WTC11 (cell line): ENCODE measurements at regions of chr16 and their contacts with region 1.

Region 1: GRCh38 chr16:27867122-27868110 is 196.1 kb downstream of the GSG1L start:
- DNase-seq: peak; percentile 96
- ATAC-seq: peak; percentile 96
- H3K4me3 Mint-ChIP-seq: no peak overlapping the region
- H3K27ac Mint-ChIP-seq: no peak overlapping the region
- H3K4me1 Mint-ChIP-seq: no peaks in the 10 kb centered on the region
- H3K27me3 Mint-ChIP-seq: peaks cover 4% of the 10 kb centered on the region
- CTCF ChIP-seq: peak; percentile 85

Region 2: DNA sequence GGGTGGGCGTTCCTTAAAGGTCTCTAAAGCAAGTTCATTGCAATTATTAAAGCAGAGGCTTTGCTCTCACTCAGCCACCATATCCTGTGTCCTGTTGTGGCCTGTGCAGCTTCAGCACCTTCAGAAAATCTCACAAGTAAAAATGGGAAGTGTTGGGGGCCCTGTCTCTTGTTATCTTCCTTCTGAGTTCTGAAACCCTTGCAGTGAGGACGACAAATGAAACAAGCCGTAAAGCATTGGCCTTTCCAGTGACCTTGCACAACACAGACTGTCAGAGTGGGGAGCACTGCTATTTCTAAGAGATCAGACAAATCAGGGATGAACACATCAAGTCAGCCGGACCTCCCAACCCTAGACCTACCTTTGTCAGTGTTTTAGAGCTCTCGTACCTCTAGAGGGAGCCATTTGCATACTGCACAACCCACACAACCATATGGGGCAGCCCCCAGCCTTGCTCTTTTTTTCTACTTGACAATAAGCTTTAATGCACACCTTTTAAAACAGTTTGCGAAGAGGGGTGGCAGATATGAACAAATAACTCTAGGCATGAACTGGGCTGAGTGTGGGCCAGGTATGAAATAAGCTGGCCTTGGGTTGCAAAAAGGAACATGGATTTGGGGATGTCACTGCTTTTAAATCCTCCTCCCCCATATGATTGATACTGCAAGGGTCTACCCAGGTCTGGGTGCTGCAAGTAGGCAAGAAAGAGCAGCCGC is 227.7 kb before region 1 on chr16:
- CTCF ChIA-PET with region 1: interaction called, 30 read pairs
- POLR2A ChIA-PET with region 1: no interaction called
- DNase-seq: peak; percentile 40
- ATAC-seq: peak; percentile 87
- H3K4me3 Mint-ChIP-seq: no peak overlapping the region
- H3K27ac Mint-ChIP-seq: no peak overlapping the region
- H3K4me1 Mint-ChIP-seq: peaks cover 25% of the 10 kb centered on the region
- H3K27me3 Mint-ChIP-seq: no peaks in the 10 kb centered on the region
- CTCF ChIP-seq: peak; percentile 46

Region 3: DNA sequence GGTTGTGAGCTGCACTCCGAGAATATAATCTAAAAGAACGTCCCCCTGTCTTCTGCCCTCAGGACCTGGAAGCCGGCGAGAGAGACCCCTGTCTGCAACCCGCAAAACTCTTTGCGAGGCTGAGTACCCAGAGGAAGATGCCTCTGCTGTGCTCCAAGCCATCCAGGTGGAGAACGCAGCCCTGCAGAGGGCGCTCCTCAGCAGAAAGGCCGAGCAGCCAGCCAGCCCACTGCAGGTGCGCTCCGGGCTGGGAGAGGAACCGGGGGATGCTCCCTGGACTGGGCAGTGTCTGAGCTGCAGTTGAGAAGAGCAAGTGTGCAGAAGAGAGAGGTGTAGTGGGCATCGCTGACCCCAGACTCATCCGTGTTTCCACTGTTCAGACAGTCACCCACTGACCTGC is 169.2 kb before region 1 on chr16:
- CTCF ChIA-PET with region 1: interaction called, 41 read pairs
- POLR2A ChIA-PET with region 1: no interaction called
- DNase-seq: peak; percentile 94
- ATAC-seq: peak; percentile 94
- H3K4me3 Mint-ChIP-seq: no peak overlapping the region
- H3K27ac Mint-ChIP-seq: no peak overlapping the region
- H3K4me1 Mint-ChIP-seq: peaks cover 21% of the 10 kb centered on the region
- H3K27me3 Mint-ChIP-seq: no peaks in the 10 kb centered on the region
- CTCF ChIP-seq: peak; percentile 61

Region 4: GRCh38 chr16:27759301-27759871 is 108.0 kb before region 1 on chr16:
- CTCF ChIA-PET with region 1: interaction called, 14 read pairs
- POLR2A ChIA-PET with region 1: no interaction called
- DNase-seq: no peak
- ATAC-seq: no peak
- H3K4me3 Mint-ChIP-seq: no peak overlapping the region
- H3K27ac Mint-ChIP-seq: no peak overlapping the region
- H3K4me1 Mint-ChIP-seq: peaks cover 14% of the 10 kb centered on the region
- H3K27me3 Mint-ChIP-seq: no peaks in the 10 kb centered on the region
- CTCF ChIP-seq: no peak

Region 5: DNA sequence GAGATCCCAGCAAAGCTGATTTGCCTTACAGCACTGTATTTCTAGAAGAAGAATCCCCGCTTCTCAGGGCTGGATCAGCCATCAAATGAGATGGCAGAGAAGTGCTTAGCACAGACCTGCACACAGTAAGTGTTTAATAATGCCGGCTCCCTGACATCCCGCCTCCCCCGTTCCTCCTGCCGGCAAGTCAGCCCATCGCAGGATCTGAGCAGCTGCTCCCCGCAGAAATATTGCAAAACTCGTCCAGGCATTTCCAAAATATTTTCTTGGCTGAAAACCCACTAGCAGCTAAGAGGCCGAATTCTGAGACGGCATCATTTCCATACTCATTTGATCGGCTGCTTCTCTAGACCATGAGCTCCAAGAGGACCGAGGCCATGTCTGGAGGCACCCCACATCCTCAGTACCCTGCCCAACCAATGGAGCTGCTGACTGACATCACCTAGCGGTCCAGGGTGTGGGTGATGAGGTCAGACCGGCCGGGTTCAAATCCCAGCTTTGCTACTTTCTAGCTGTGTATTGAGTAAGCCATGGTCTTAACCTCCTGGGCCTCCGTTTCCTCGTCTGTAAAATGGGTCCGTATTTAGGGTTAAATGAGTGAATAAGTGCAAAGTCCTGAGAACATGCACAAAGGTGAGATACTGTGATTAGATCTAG is 66.0 kb before region 1 on chr16:
- CTCF ChIA-PET with region 1: interaction called, 10 read pairs
- POLR2A ChIA-PET with region 1: no interaction called
- DNase-seq: no peak
- ATAC-seq: no peak
- H3K4me3 Mint-ChIP-seq: no peak overlapping the region
- H3K27ac Mint-ChIP-seq: no peak overlapping the region
- H3K4me1 Mint-ChIP-seq: peaks cover 10% of the 10 kb centered on the region
- H3K27me3 Mint-ChIP-seq: no peaks in the 10 kb centered on the region
- CTCF ChIP-seq: no peak

Region 6: GRCh38 chr16:27853101-27853500 is 14.3 kb before region 1 on chr16:
- CTCF ChIA-PET with region 1: interaction called, 36 read pairs
- POLR2A ChIA-PET with region 1: no interaction called
- DNase-seq: no peak
- ATAC-seq: no peak
- H3K4me3 Mint-ChIP-seq: no peak overlapping the region
- H3K27ac Mint-ChIP-seq: no peak overlapping the region
- H3K4me1 Mint-ChIP-seq: peaks cover 34% of the 10 kb centered on the region
- H3K27me3 Mint-ChIP-seq: no peaks in the 10 kb centered on the region; the same call in 1 of the 2 replicates
- CTCF ChIP-seq: no peak

Region 7: DNA sequence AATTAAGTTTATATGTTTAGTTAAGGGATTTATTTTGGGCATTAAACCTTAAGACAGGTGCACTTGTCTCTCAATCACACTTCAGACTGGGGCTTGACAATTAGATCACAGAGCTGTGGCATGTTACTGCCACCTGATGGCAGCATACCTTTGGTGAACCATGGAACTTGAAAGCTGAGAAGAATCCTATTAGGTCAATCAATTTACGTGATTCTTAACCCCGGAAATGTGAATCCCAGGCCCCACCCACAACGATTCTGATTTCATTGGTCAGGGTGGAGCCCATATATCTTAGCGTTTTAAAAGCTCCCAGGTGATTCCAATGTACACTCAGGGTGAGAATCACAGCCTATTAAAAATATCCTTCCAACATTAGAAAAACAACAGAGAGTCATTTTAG is 105.1 kb after region 1 on chr16:
- CTCF ChIA-PET with region 1: interaction called, 14 read pairs
- POLR2A ChIA-PET with region 1: no interaction called
- DNase-seq: peak; percentile 62
- ATAC-seq: peak; percentile 89
- H3K4me3 Mint-ChIP-seq: no peak overlapping the region
- H3K27ac Mint-ChIP-seq: no peak overlapping the region
- H3K4me1 Mint-ChIP-seq: no peaks in the 10 kb centered on the region
- H3K27me3 Mint-ChIP-seq: no peaks in the 10 kb centered on the region
- CTCF ChIP-seq: no peak; the same call in 1 of the 2 replicates

Region 8: GRCh38 chr16:28531777-28532744 is 664.6 kb after region 1 on chr16:
- CTCF ChIA-PET with region 1: no interaction called
- POLR2A ChIA-PET with region 1: no interaction called
- DNase-seq: peak; percentile 69
- ATAC-seq: peak; percentile 100
- H3K4me3 Mint-ChIP-seq: no peak overlapping the region
- H3K27ac Mint-ChIP-seq: peak overlapping the region; percentile 38
- H3K4me1 Mint-ChIP-seq: peaks cover 9% of the 10 kb centered on the region
- H3K27me3 Mint-ChIP-seq: no peaks in the 10 kb centered on the region; the same call in 1 of the 2 replicates
- CTCF ChIP-seq: no peak